ENCODE measurements at regions of chr15 and their contacts with region 1.

Region 1: GRCh38 chr15:52735231-52736089 is 54.7 kb downstream of the ONECUT1 start:
- DNase-seq: peak; percentile 68
- H3K4me3 ChIP-seq: no peak overlapping the region
- H3K27ac ChIP-seq: no peak overlapping the region
- H3K4me1 ChIP-seq: peaks cover 9% of the 10 kb centered on the region
- H3K27me3 ChIP-seq: no peaks in the 10 kb centered on the region
- CTCF ChIP-seq: peak; percentile 70 to 71

Region 2: GRCh38 chr15:52331490-52332240 is 403.8 kb before region 1 on chr15:
- CTCF ChIA-PET with region 1: interaction called, 9 read pairs
- dilution Hi-C with region 1: loop called (anchors 5 kb)
- in situ Hi-C with region 1: loop called (anchors 10 to 25 kb)
- intact Hi-C with region 1: loop called (anchors 1 kb)
- DNase-seq: peak; percentile 75
- H3K4me3 ChIP-seq: no peak overlapping the region
- H3K27ac ChIP-seq: no peak overlapping the region
- H3K4me1 ChIP-seq: peaks cover 25% of the 10 kb centered on the region
- H3K27me3 ChIP-seq: no peaks in the 10 kb centered on the region
- CTCF ChIP-seq: peak; percentile 65 to 66

Region 3: DNA sequence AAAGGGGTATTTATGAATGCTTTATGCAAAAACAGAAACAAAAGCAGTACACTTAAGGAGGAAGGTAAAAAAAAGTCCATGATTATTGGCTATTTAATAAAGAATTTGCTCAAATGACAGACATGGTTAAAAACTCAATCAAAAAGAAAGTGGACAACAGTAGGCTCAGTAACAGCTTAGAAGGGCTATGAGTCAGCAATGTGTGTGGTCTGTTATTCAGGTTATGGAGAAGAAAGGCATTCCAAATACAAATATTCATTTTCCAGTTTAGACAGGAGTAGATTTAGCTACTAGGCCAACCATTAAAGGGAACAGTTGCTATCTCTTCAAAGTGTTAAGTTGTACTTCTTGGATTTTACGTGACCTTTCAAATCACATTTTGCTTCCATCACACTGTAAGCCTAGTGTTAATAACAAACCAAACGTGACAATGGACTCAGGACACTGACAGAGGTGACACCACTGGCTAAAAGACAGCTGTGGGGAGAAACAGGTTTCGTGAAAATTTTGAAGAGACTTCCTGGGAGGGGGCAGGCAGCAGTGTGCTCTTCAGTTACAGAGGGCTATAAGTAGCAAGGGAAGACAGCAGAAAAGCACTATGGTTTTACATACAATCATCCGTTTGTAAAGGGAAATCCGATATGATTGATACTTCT is 398.1 kb before region 1 on chr15:
- CTCF ChIA-PET with region 1: interaction called, 9 read pairs
- dilution Hi-C with region 1: loop called (anchors 5 kb)
- in situ Hi-C with region 1: loop called (anchors 10 to 25 kb)
- intact Hi-C with region 1: no loop called
- DNase-seq: peak; percentile 79
- H3K4me3 ChIP-seq: no peak overlapping the region
- H3K27ac ChIP-seq: peak overlapping the region; percentile 17
- H3K4me1 ChIP-seq: peaks cover 41% of the 10 kb centered on the region
- H3K27me3 ChIP-seq: no peaks in the 10 kb centered on the region
- CTCF ChIP-seq: no peak

Region 4: GRCh38 chr15:52362502-52362901 is 373.0 kb before region 1 on chr15:
- CTCF ChIA-PET with region 1: no interaction called
- dilution Hi-C with region 1: loop called (anchors 10 kb)
- in situ Hi-C with region 1: no loop called
- intact Hi-C with region 1: no loop called
- DNase-seq: peak; percentile 72
- H3K4me3 ChIP-seq: no peak overlapping the region
- H3K27ac ChIP-seq: no peak overlapping the region
- H3K4me1 ChIP-seq: peaks cover 27% of the 10 kb centered on the region
- H3K27me3 ChIP-seq: no peaks in the 10 kb centered on the region
- CTCF ChIP-seq: no peak

Region 5: DNA sequence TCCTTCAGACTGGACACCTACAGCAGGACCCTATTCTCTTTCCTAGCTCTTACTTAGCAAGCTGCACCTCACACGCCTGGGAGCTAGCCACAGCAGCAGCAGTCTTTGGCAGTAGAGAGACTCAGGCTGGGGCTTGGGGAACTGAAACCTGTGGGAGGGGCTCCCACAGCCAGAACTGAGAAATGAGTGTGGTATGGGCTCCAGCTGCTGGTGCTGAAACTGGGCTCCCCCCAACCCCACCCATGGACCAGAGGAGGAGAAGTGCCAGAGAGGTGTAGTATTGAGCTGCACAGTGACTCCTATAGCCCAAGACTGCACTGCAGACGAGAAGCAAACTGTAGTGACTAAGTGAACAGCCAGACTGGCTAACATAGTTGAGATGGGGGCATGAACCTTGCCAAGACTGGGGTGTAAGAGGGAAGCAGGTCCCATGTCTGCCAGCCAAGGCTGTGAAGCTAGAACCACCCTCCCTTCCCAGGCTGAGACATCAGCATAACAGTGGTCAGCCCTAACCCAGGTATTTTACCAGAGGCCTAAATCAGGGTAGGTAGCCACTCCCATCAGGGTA is 269.2 kb before region 1 on chr15:
- CTCF ChIA-PET with region 1: no interaction called
- dilution Hi-C with region 1: no loop called
- in situ Hi-C with region 1: no loop called
- intact Hi-C with region 1: loop called (anchors 10 kb)
- DNase-seq: no peak
- H3K4me3 ChIP-seq: no peak overlapping the region
- H3K27ac ChIP-seq: no peak overlapping the region
- H3K4me1 ChIP-seq: peaks cover 8% of the 10 kb centered on the region
- H3K27me3 ChIP-seq: no peaks in the 10 kb centered on the region
- CTCF ChIP-seq: no peak

Region 6: GRCh38 chr15:52568601-52569256 is 166.7 kb before region 1 on chr15 and contains the start of gene ARPP19:
- CTCF ChIA-PET with region 1: no interaction called
- dilution Hi-C with region 1: no loop called
- in situ Hi-C with region 1: no loop called
- intact Hi-C with region 1: loop called (anchors 1 kb)
- DNase-seq: peak; percentile 93
- H3K4me3 ChIP-seq: peak within 1 kb of the TSS; percentile 71 to 76 (median 74)
- H3K27ac ChIP-seq: peak within 1 kb of the TSS; percentile 93
- H3K4me1 ChIP-seq: peaks cover 5% of the 10 kb centered on the region
- H3K27me3 ChIP-seq: no peaks in the 10 kb centered on the region
- CTCF ChIP-seq: peak in 1 of 2 donors; percentile 31
- total RNA-seq, gene ARPP19: 153 to 200 TPM

Region 7: DNA sequence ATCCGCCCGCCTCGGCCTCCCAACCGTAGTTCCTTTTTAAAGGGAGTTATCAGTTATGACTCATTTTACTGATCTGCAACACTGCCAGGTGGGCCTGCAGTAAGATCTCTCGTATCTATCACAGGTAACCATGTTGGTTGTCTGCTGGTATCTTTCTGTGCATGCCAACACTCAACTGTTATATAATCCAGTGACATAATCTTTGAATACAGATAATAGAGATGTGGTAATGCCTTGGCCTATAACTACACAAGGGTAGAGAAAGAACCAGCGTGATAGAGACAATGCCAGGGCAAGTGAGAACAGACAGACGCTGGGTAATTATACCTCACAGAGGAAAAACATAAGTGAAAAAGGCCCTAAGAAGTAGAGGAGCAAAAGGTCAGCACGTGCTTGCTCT is 155.6 kb before region 1 on chr15:
- CTCF ChIA-PET with region 1: no interaction called
- dilution Hi-C with region 1: no loop called
- in situ Hi-C with region 1: no loop called
- intact Hi-C with region 1: no loop called
- DNase-seq: no peak
- H3K4me3 ChIP-seq: no peak overlapping the region
- H3K27ac ChIP-seq: no peak overlapping the region
- H3K4me1 ChIP-seq: no peaks in the 10 kb centered on the region
- H3K27me3 ChIP-seq: no peaks in the 10 kb centered on the region
- CTCF ChIP-seq: no peak

Region 8: DNA sequence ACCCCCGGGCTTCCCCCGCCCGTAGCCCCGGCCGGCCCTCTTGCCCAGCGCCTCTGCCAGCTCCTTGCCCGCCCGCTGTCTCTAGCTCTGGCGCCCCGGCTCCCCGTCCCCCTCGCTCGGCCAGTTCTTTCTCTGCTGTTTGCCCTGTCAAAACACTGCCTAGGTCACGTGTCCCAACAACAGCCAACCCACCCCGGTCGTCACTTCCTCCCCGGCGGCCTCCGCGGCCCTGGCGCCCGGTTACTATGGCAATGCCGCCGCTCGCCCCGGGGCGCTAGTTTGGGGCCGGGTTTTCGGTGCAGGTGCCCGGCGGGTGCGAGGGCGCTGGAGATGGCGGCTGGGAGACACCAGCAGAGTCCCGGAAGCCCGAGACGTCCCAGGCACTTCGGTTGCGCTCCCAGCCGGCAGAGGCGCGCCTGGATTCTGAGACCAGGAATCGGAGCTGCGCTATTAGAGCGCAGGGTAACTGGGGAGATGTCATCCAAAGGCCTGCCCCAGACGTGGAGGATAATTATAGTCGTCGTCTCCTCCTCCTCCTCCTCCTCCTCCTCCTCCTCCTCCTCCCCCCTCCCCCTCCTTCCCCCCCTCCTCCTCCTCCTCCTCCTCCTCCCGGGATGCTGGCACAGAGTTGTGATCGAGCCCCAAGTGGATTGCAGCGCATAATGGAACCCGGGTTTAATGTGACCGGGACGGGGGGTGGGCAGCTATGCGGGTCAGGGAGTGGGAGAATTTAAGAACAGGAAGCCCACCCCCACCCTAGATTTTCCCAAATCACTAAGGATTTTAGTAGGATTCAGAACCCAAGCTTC is 56.0 kb before region 1 on chr15 and contains the start of gene ATOSA:
- CTCF ChIA-PET with region 1: no interaction called
- dilution Hi-C with region 1: no loop called
- in situ Hi-C with region 1: no loop called
- intact Hi-C with region 1: loop called (anchors 1 kb)
- DNase-seq: peak; percentile 88
- H3K4me3 ChIP-seq: peak within 1 kb of the TSS; percentile 67 to 99 (median 95)
- H3K27ac ChIP-seq: peak within 1 kb of the TSS; percentile 83
- H3K4me1 ChIP-seq: peaks cover 4% of the 10 kb centered on the region
- H3K27me3 ChIP-seq: no peaks in the 10 kb centered on the region
- CTCF ChIP-seq: peak in 1 of 2 donors; percentile 18
- total RNA-seq, gene ATOSA: 14.4 to 25.3 TPM

Region 9: DNA sequence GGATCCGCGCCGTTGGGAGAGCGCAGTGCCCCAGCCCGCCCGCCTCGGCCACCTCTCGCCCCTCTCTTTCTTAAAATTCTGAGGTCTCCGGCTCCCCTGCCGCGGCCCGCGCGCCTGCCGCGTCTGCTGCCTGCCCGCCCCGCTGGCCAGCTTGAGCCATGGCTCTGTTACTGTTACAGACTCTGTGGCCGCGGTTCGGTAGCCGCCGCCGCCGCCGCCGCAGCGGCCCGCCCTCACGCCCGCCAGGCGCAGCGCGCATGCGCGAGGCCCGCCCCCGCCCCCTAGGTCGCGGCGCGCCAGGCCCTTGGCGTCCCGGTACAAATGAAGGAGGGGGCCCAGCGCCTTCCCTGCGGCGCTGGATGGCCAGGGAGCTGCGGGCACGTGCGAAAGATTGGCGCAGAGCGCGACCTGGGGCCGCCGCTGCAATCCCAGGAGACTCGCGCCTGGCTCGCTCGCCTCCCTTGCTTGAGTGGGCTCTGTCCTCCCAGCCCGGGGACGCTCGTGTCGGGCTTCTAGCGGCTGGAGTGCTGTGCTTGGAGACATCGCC is 54.8 kb after region 1 on chr15 and contains the start of gene ONECUT1:
- CTCF ChIA-PET with region 1: no interaction called
- dilution Hi-C with region 1: no loop called
- in situ Hi-C with region 1: no loop called
- intact Hi-C with region 1: no loop called
- DNase-seq: peak; percentile 32
- H3K4me3 ChIP-seq: peak within 1 kb of the TSS; percentile 42 to 52 (median 52)
- H3K27ac ChIP-seq: no peak within 1 kb of the TSS
- H3K4me1 ChIP-seq: peaks cover 13% of the 10 kb centered on the region
- H3K27me3 ChIP-seq: peaks cover 66% of the 10 kb centered on the region
- CTCF ChIP-seq: no peak
- total RNA-seq, gene ONECUT1: not detected

Measured in mammary epithelial cell (primary cell).